HAP-1 (cell line): ENCODE measurements at regions of chr9 and their contacts with region 1.

Region 1: GRCh38 chr9:116737152-116737546 is 50.0 kb downstream of the TRIM32 start:
- DNase-seq: peak; percentile 71 to 94
- H3K4me3 ChIP-seq: no peak overlapping the region
- H3K4me1 ChIP-seq: no peaks in the 10 kb centered on the region; the same call in 1 of the 2 replicates
- H3K27me3 ChIP-seq: no peaks in the 10 kb centered on the region

Region 2: GRCh38 chr9:116855883-116856662 is 118.9 kb after region 1 on chr9:
- in situ Hi-C with region 1: loop called (anchors 5 kb)
- DNase-seq: no peak
- H3K4me3 ChIP-seq: no peak overlapping the region
- H3K4me1 ChIP-seq: no peaks in the 10 kb centered on the region
- H3K27me3 ChIP-seq: 0 out of 2 replicates have a peak, but pooled peaks cover 3% of the 10 kb centered on the region